Activated naive CD8-positive, alpha-beta T cell treated with anti-CD3 and anti-CD28 coated beads, Interleukin-2, amount 10 ng/mL, durations not matched to agents 7 days and 5 days (primary cell): ENCODE measurements at regions of chr4 and their contacts with region 1.

Region 1: GRCh38 chr4:2262143-2262943 is 434 bp upstream of the MXD4 start:
- DNase-seq: peak; percentile 97
- ATAC-seq: peak; percentile 94
- H3K4me3 Mint-ChIP-seq: peak overlapping the region; percentile 70
- H3K27ac Mint-ChIP-seq: peak overlapping the region; percentile 77
- H3K4me1 Mint-ChIP-seq: no peaks in the 10 kb centered on the region
- H3K27me3 Mint-ChIP-seq: no peaks in the 10 kb centered on the region

Region 2: GRCh38 chr4:2241410-2242353 is 20.7 kb before region 1 on chr4 and contains the starts of genes HAUS3 and POLN:
- POLR2A ChIA-PET with region 1: interaction called, 10 read pairs
- DNase-seq: peak; percentile 99
- ATAC-seq: peak; percentile 93
- H3K4me3 Mint-ChIP-seq: peak within 1 kb of the TSS; percentile 92
- H3K27ac Mint-ChIP-seq: peak within 1 kb of the TSS; percentile 89
- H3K4me1 Mint-ChIP-seq: peaks cover 50% of the 10 kb centered on the region
- H3K27me3 Mint-ChIP-seq: peaks cover 4% of the 10 kb centered on the region
- total RNA-seq, gene HAUS3: 28.5 to 28.7 TPM
- total RNA-seq, gene POLN: 2.4 to 3.2 TPM

Region 3: GRCh38 chr4:2290974-2291704 is 28.8 kb after region 1 on chr4:
- POLR2A ChIA-PET with region 1: interaction called, 12 read pairs
- DNase-seq: peak; percentile 74
- ATAC-seq: peak; percentile 95
- H3K4me3 Mint-ChIP-seq: peak overlapping the region; percentile 77
- H3K27ac Mint-ChIP-seq: peak overlapping the region; percentile 84
- H3K4me1 Mint-ChIP-seq: peaks cover 25% of the 10 kb centered on the region
- H3K27me3 Mint-ChIP-seq: no peaks in the 10 kb centered on the region

Region 4: GRCh38 chr4:2412885-2413716 is 150.8 kb after region 1 on chr4:
- POLR2A ChIA-PET with region 1: interaction called, 22 read pairs
- DNase-seq: peak; percentile 86
- ATAC-seq: peak; percentile 85
- H3K4me3 Mint-ChIP-seq: peak overlapping the region; percentile 58
- H3K27ac Mint-ChIP-seq: peak overlapping the region; percentile 90
- H3K4me1 Mint-ChIP-seq: peaks cover 34% of the 10 kb centered on the region
- H3K27me3 Mint-ChIP-seq: peaks cover 42% of the 10 kb centered on the region